ENCODE measurements at regions of chrX and their contacts with region 1.

Region 1: GRCh38 chrX:153470435-153471363 is at the start of gene HAUS7:
- DNase-seq: peak; percentile 69
- ATAC-seq: peak; percentile 88
- H3K4me3 Mint-ChIP-seq: peak within 1 kb of the TSS; percentile 83
- H3K27ac Mint-ChIP-seq: peak within 1 kb of the TSS; percentile 66
- H3K4me1 Mint-ChIP-seq: peaks cover 16% of the 10 kb centered on the region
- H3K27me3 Mint-ChIP-seq: no peaks in the 10 kb centered on the region
- CTCF ChIP-seq: no peak
- total RNA-seq, gene HAUS7: 39.2 and 42.7 TPM in 2 replicates

Region 2: DNA sequence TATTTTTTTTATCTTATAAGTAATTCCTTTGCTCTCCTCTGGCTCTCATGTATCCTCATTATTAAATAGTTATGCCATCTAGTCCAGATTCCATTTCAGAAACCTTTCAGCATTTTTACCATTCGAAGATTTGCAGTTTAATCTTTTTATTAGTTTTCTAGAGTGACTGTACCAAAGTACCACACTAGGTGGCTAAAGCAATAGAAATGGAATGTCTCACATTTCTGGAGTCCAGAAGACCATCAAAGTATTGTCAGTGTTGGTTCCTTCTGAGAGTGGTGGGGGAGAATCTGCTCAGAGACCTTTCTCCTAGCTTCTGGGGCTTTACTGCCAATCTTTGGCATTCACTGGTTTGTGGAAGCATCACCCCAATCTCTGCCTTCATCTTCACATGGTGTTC is 418.2 kb before region 1 on chrX:
- CTCF ChIA-PET with region 1: no interaction called
- POLR2A ChIA-PET with region 1: interaction called, 12 read pairs
- intact Hi-C with region 1: no loop called
- DNase-seq: no peak
- ATAC-seq: no peak
- H3K4me3 Mint-ChIP-seq: no peak overlapping the region
- H3K27ac Mint-ChIP-seq: no peak overlapping the region
- H3K4me1 Mint-ChIP-seq: peaks cover 4% of the 10 kb centered on the region
- H3K27me3 Mint-ChIP-seq: peaks cover 5% of the 10 kb centered on the region
- CTCF ChIP-seq: no peak

Region 3: GRCh38 chrX:153333768-153334645 is 136.7 kb before region 1 on chrX and contains the start of gene ZNF275:
- CTCF ChIA-PET with region 1: no interaction called
- POLR2A ChIA-PET with region 1: no interaction called
- intact Hi-C with region 1: loop called (anchors 1 kb)
- DNase-seq: peak; percentile 80
- ATAC-seq: peak; percentile 94
- H3K4me3 Mint-ChIP-seq: peak within 1 kb of the TSS; percentile 85
- H3K27ac Mint-ChIP-seq: peak within 1 kb of the TSS; percentile 76
- H3K4me1 Mint-ChIP-seq: peaks cover 44% of the 10 kb centered on the region
- H3K27me3 Mint-ChIP-seq: no peaks in the 10 kb centered on the region
- CTCF ChIP-seq: no peak
- total RNA-seq, gene ZNF275: 19.5 and 22.4 TPM in 2 replicates

Region 4: DNA sequence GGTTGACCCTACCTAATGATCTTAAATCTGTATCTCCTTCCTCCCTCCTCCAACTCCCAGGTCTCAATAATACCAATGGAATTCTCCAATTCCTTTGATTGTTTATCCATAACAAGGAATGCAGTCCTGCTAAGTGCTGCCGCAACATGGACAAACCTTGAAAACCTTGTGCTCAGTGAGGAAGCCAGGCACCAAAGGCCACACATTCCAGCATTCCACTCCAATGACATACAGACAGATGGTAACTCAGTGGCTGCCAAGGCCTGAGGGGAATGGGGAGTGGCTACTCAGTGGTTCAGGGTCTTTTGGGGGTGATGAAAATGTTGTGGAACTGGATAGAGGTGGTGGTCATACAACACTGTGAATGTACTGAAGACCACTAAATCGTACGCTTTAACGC is 10.7 kb before region 1 on chrX:
- CTCF ChIA-PET with region 1: no interaction called
- POLR2A ChIA-PET with region 1: no interaction called
- intact Hi-C with region 1: no loop called
- DNase-seq: no peak
- ATAC-seq: no peak
- H3K4me3 Mint-ChIP-seq: no peak overlapping the region
- H3K27ac Mint-ChIP-seq: no peak overlapping the region
- H3K4me1 Mint-ChIP-seq: no peaks in the 10 kb centered on the region
- H3K27me3 Mint-ChIP-seq: no peaks in the 10 kb centered on the region
- CTCF ChIP-seq: no peak

Region 5: GRCh38 chrX:153507484-153508178 is 36.9 kb after region 1 on chrX:
- CTCF ChIA-PET with region 1: interaction called, 8 read pairs
- POLR2A ChIA-PET with region 1: interaction called, 3 read pairs
- intact Hi-C with region 1: loop called (anchors 1 kb)
- DNase-seq: peak; percentile 68
- ATAC-seq: peak; percentile 99
- H3K4me3 Mint-ChIP-seq: no peak overlapping the region
- H3K27ac Mint-ChIP-seq: no peak overlapping the region
- H3K4me1 Mint-ChIP-seq: no peaks in the 10 kb centered on the region
- H3K27me3 Mint-ChIP-seq: no peaks in the 10 kb centered on the region
- CTCF ChIP-seq: no peak

Region 6: GRCh38 chrX:153599192-153600031 is 128.7 kb after region 1 on chrX:
- CTCF ChIA-PET with region 1: no interaction called
- POLR2A ChIA-PET with region 1: no interaction called
- intact Hi-C with region 1: loop called (anchors 2 kb)
- DNase-seq: peak; percentile 82
- ATAC-seq: peak; percentile 84
- H3K4me3 Mint-ChIP-seq: peak overlapping the region; percentile 77
- H3K27ac Mint-ChIP-seq: no peak overlapping the region
- H3K4me1 Mint-ChIP-seq: peaks cover 36% of the 10 kb centered on the region
- H3K27me3 Mint-ChIP-seq: no peaks in the 10 kb centered on the region
- CTCF ChIP-seq: no peak

Region 7: GRCh38 chrX:153794018-153794896 is 323.6 kb after region 1 on chrX and contains the starts of genes IDH3G and SSR4:
- CTCF ChIA-PET with region 1: no interaction called
- POLR2A ChIA-PET with region 1: no interaction called
- intact Hi-C with region 1: loop called (anchors 1 kb)
- DNase-seq: peak; percentile 84
- ATAC-seq: peak; percentile 91
- H3K4me3 Mint-ChIP-seq: peak within 1 kb of the TSS; percentile 94
- H3K27ac Mint-ChIP-seq: peak within 1 kb of the TSS; percentile 92
- H3K4me1 Mint-ChIP-seq: peaks cover 19% of the 10 kb centered on the region
- H3K27me3 Mint-ChIP-seq: no peaks in the 10 kb centered on the region
- CTCF ChIP-seq: no peak
- total RNA-seq, gene IDH3G: 58.5 and 60.3 TPM in 2 replicates
- total RNA-seq, gene SSR4: 160 and 175 TPM in 2 replicates

Measured in activated B cell treated with CpG ODN at 0.5 μM for 24 hours (primary cell).